ENCODE measurements at regions of chr12 and their contacts with region 1.

Region 1: DNA sequence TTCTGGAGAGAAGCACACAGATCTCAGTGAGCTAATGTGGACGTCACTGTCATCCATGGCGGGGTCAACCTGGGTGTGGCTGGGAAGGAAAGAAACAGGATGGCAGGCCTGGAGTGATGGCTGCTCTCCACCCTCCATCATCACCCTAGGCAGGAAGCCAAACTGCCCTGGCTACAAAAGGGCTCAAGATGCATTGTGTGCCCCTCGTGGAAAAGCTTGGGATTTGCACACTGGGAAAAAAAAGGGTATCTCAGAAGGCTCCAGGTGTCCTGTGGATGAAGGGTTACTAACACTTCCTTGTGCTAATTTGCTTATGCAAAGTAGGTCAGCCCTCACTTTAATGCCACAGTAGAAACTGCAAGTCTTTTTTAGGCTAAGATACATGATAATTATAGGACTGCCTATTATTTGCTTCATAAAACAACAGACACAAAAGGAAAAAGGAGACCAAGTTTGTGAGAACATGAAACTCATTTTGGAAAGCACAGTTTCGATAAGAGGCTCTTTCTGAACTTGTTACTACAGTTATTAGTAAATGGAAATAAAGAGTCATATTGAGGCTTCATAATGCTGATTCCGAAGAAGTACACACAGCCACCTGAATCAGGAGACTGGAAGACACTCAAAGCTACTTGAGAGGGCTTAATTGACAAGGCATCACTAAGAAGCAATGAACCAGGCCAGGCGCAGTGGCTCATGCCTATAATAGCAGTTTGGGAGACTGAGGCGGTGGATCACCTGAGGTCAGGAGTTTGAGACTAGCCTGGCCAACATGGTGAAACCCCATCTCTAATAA is 18.9 kb downstream of the RFC5 start:
- DNase-seq: peak; percentile 60
- ATAC-seq: peak; percentile 89
- H3K4me3 Mint-ChIP-seq: peak overlapping the region; percentile 22
- H3K27ac Mint-ChIP-seq: peak overlapping the region; percentile 89
- H3K4me1 Mint-ChIP-seq: peaks cover 55% of the 10 kb centered on the region
- H3K27me3 Mint-ChIP-seq: no peaks in the 10 kb centered on the region

Region 2: GRCh38 chr12:116087962-116088361 is 1947.5 kb before region 1 on chr12:
- CTCF ChIA-PET with region 1: no interaction called
- POLR2A ChIA-PET with region 1: no interaction called
- intact Hi-C with region 1: loop called in 1 of 2 experiments (anchors 10 kb)
- DNase-seq: peak; percentile 13
- ATAC-seq: peak; percentile 71
- H3K4me3 Mint-ChIP-seq: peak overlapping the region; percentile 16
- H3K27ac Mint-ChIP-seq: peak overlapping the region; percentile 78
- H3K4me1 Mint-ChIP-seq: peaks cover 57% of the 10 kb centered on the region
- H3K27me3 Mint-ChIP-seq: no peaks in the 10 kb centered on the region

Region 3: DNA sequence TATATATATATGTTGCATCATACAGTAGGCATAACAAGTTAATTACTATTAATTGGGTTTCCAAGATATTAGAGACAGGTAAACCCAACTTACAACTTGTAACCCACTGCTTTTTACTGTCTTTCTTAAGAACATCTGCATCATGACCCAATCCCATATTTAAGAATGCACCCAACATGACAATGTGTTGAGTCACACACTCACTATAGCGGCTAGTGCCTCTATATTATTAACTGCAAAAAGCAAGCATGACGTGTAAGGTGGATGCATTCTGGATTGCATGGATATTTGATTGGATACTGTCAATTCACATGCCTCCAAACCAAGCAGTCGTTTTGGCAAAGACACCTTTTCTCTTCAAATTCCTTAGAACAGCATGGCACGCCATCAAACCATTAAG is 134.9 kb before region 1 on chr12:
- CTCF ChIA-PET with region 1: no interaction called
- POLR2A ChIA-PET with region 1: no interaction called
- intact Hi-C with region 1: no loop called
- DNase-seq: no peak
- ATAC-seq: no peak
- H3K4me3 Mint-ChIP-seq: no peak overlapping the region
- H3K27ac Mint-ChIP-seq: no peak overlapping the region
- H3K4me1 Mint-ChIP-seq: peaks cover 1% of the 10 kb centered on the region
- H3K27me3 Mint-ChIP-seq: peaks cover 3% of the 10 kb centered on the region

Region 4: GRCh38 chr12:117986705-117987469 is 48.6 kb before region 1 on chr12:
- CTCF ChIA-PET with region 1: no interaction called
- POLR2A ChIA-PET with region 1: no interaction called
- intact Hi-C with region 1: no loop called
- DNase-seq: no peak
- ATAC-seq: peak; percentile 89
- H3K4me3 Mint-ChIP-seq: no peak overlapping the region
- H3K27ac Mint-ChIP-seq: no peak overlapping the region
- H3K4me1 Mint-ChIP-seq: peaks cover 7% of the 10 kb centered on the region
- H3K27me3 Mint-ChIP-seq: peaks cover 7% of the 10 kb centered on the region

Region 5: DNA sequence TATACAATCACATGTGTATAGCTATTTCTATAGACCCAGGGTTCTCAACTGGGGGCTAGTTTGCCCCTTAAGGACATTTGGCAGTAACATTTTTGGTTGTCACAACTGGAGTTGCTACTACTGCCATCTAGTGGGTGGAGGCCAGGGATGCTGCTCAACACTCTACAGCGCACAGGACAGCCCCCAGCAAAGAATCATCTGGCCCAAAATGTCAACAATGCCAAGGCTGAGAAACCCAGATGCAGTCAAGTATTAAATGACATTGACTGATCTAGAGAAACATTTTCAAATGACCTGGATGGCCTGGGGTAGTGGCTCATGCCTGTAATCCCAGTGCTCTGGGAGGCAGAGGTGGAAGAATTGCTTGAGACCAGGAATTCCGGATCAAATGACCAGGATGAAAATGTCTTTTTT is 19.7 kb after region 1 on chr12:
- CTCF ChIA-PET with region 1: interaction called, 48 read pairs
- POLR2A ChIA-PET with region 1: interaction called, 8 read pairs
- intact Hi-C with region 1: loop called (anchors 1 kb)
- DNase-seq: peak; percentile 87
- ATAC-seq: peak; percentile 76
- H3K4me3 Mint-ChIP-seq: no peak overlapping the region
- H3K27ac Mint-ChIP-seq: no peak overlapping the region
- H3K4me1 Mint-ChIP-seq: peaks cover 53% of the 10 kb centered on the region
- H3K27me3 Mint-ChIP-seq: no peaks in the 10 kb centered on the region

Measured in activated CD4-positive, alpha-beta T cell treated with anti-CD3 and anti-CD28 coated beads for 36 hours (primary cell).